GM12878 (cell line): ENCODE measurements at regions of chr15 and their contacts with region 1.

Region 1: DNA sequence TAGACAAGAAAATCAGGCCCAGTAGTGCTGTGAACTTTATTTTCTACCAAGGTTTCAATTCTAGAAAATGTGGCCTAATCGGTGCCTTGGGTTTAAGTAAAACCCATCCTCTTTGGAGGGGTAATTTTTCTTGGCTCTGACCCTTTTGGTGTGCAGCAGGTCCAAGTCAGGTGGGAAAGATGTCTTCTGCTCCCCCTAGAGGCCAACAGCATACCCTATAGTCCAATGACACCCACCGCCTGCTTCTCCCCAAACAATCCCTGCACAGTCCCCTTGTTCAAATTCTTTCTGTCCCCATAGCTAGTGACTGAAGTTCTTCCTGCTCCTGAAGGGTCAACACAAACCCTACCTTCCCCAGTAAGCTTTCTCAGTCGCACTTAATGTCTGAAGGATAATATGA is 261.8 kb upstream of the GOLGA6L4 start:
- DNase-seq: no peak
- ATAC-seq: peak; percentile 93
- H3K4me3 ChIP-seq: no peak overlapping the region
- H3K27ac ChIP-seq: no peak overlapping the region
- H3K4me1 ChIP-seq: no peaks in the 10 kb centered on the region
- H3K27me3 ChIP-seq: no peaks in the 10 kb centered on the region
- CTCF ChIP-seq: peak; percentile 58 to 64 (median 61)
- EP300 ChIP-seq: no peak
- POLR2A ChIP-seq: no peak
- RAD21 ChIP-seq: peak; percentile 60

Region 2: DNA sequence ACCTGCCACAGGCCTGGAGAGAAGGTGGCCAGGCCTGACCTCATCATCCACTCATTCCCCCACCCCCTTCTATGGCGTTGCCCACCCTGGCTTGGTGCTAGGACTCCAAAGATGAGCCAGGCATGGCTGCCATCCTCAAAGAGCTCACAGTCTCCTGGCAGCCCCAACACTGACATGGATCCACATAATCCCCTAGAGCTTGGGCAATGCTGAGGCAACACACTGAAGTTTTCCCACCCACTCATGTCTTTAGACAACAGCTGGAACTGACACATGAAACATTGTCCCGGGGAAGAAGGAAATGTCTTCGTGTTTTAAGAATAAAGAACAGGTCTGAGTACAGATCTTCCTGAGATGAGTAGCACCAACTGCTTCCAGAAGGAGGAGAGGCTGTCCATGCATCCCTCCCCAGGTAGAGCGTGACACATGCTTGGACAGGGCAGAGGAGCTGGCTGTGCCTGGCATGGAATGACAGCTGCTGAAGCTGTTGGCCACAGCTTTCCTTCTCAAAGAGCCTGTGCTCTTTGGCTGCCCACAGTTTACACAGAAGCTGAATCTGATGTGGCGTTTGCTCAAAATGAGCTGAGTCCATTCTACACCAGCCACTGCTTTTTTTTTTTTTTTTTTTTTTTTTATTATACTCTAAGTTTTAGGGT is 1091.4 kb before region 1 on chr15:
- CTCF ChIA-PET with region 1: no interaction called
- POLR2A ChIA-PET with region 1: no interaction called
- RAD21 ChIA-PET with region 1: no interaction called
- SMC1A ChIA-PET with region 1: no interaction called
- in situ Hi-C with region 1: no loop called
- intact Hi-C with region 1: no loop called
- DNase-seq: no peak
- ATAC-seq: no peak
- H3K4me3 ChIP-seq: no peak overlapping the region
- H3K27ac ChIP-seq: no peak overlapping the region
- H3K4me1 ChIP-seq: no peaks in the 10 kb centered on the region
- H3K27me3 ChIP-seq: no peaks in the 10 kb centered on the region; a peak in 2 of 4 replicates
- CTCF ChIP-seq: no peak
- EP300 ChIP-seq: no peak
- POLR2A ChIP-seq: no peak
- RAD21 ChIP-seq: no peak

Region 3: DNA sequence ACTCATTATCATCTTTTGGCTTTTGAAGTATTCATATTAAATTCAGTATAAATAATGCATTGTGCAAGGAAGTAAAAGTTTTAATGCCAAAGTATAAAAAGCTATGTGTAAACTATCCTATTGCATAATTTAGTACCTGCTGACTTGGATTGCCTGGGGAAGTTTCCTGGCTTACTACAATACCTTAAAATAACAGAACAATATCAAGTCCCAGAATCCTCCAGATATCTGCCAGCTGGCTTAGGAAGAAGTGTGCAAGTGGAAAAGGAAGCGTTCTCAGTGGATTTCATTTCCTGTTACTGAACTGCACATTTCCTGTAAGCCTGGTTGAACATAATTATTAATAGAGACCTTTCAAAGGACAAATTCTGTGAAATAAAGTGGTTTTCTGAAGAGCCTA is 83.2 kb before region 1 on chr15:
- CTCF ChIA-PET with region 1: interaction called, 10 read pairs
- POLR2A ChIA-PET with region 1: interaction called, 3 read pairs
- RAD21 ChIA-PET with region 1: interaction called, 4 read pairs
- SMC1A ChIA-PET with region 1: interaction called, 5 read pairs
- in situ Hi-C with region 1: no loop called
- intact Hi-C with region 1: no loop called
- DNase-seq: no peak
- ATAC-seq: no peak
- H3K4me3 ChIP-seq: no peak overlapping the region
- H3K27ac ChIP-seq: no peak overlapping the region
- H3K4me1 ChIP-seq: peaks cover 3% of the 10 kb centered on the region; the same call in 1 of the 2 replicates
- H3K27me3 ChIP-seq: no peaks in the 10 kb centered on the region
- CTCF ChIP-seq: no peak
- EP300 ChIP-seq: no peak
- POLR2A ChIP-seq: no peak
- RAD21 ChIP-seq: no peak